ENCODE measurements at regions of chr11 and their contacts with region 1.

Region 1: DNA sequence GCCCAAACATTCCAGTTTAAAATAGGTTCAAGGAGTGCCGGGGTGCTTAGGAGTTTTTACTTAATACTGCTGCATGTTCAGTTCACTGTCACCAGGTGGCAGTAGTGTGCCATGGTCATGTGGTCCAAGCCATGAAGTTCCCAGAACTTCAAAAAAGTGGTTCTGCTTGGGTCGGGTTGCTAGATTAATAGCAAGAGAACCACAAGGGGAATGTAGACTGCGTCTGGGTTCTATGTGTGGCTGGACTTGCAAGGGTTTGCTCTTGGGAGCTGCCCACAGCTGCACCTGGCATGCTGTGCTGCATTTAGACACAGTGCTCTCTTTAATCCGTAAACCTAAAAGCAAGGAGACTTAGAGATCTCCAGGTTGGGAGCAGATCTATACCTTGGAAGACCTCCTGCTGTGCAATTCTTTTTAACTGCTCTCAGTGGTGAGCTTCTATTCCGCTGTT is 6.5 kb upstream of the SPON1 start:
- DNase-seq: peak; percentile 80
- H3K4me3 ChIP-seq: no peak overlapping the region
- H3K27ac ChIP-seq: no peak overlapping the region
- H3K4me1 ChIP-seq: peaks cover 20% of the 10 kb centered on the region
- CTCF ChIP-seq: peak; percentile 98

Region 2: DNA sequence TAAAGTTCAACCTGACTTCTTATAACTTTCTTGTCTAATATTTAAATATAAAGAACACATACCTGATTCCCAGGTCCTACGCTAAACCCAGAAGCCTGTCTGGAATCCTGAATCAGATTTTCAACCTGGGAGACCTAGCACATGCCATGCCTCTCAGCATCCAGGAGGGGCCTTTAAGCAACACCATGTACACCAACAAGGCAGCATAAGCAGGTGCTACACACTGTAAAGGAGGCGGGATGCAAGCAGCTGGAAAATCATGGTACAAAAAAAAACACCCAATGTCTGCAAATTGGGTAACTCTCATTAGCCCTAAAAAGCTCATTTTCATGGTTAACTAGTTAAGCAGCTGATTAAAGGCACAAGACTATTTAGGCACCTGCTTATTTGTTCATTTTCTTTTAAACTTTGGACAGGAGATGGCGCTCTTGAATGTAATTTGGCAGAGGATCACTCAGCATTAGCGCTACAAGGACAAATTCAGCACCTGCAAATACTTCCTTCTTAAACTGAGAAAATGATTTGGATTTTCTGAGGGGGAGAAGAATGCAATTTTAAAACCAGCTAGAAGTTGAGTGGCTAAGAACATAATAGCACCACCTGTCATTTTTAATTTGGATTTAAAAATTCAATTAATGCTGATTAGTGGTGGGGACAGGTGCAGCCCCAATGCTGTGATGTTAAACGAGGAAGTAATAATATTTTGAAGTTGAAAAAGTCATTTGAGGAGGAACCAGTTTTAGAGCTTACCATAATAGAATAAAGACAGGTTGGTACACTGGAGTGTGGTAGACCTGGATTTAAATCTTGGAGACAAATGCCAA is 183.6 kb before region 1 on chr11:
- CTCF ChIA-PET with region 1: no interaction called
- POLR2A ChIA-PET with region 1: interaction called, 5 read pairs
- intact Hi-C with region 1: loop called (anchors 2 kb)
- DNase-seq: peak; percentile 90
- H3K4me3 ChIP-seq: no peak overlapping the region
- H3K27ac ChIP-seq: peak overlapping the region; percentile 21
- H3K4me1 ChIP-seq: peaks cover 25% of the 10 kb centered on the region
- CTCF ChIP-seq: peak; percentile 98

Region 3: DNA sequence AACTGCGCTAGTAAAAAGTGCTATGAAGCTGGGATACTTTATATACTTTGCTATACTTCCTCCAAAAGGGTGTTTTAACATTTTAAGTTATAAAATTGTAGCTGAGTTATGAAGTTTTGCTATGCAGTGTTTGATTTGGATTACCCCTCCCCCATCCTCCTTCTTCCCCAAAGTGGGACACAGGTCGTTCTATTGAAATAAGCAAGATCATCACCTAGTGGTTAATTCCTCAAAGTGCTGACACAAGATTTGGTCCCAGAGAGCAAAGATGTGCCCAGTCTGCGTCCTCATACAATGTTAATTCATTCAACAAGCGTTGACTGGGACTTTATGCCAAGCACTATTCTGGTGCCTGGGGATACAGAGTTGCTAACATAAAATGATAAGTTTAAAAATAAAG is 85.0 kb after region 1 on chr11:
- CTCF ChIA-PET with region 1: no interaction called
- POLR2A ChIA-PET with region 1: interaction called, 7 read pairs
- intact Hi-C with region 1: loop called (anchors 5 kb)
- DNase-seq: peak; percentile 41
- H3K4me3 ChIP-seq: no peak overlapping the region
- H3K27ac ChIP-seq: no peak overlapping the region
- H3K4me1 ChIP-seq: no peaks in the 10 kb centered on the region
- CTCF ChIP-seq: peak; percentile 77

Region 4: DNA sequence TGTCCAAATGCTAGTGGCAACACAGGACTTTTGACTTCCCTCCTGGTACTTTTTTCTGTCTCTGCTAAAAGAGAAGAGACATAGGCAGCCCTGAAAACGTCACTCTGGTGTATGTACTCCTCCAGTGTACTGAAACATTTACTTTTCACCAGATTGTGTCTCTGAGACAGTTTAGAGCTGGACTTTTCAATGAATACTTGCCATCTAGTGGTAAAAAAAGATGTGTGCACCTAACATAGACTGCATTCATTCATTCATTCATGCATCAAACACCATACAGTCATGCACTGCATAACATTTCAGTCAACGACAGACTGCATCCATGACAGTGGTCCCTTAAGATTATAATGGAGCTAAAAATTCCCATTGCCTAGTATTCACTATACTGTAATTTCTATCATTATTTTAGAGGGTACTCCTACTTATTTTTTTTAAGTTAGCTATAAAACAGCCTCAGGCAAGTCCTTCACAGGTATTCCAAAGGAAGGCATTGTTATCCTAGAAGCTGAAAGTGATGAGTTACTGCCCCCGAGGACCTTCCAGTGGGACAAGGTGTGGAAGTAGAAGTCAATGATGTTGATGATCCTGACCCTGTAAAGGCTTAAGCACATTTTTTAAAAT is 192.8 kb after region 1 on chr11:
- CTCF ChIA-PET with region 1: interaction called, 3 read pairs
- POLR2A ChIA-PET with region 1: no interaction called
- intact Hi-C with region 1: loop called (anchors 1 kb)
- DNase-seq: peak; percentile 76
- H3K4me3 ChIP-seq: no peak overlapping the region
- H3K27ac ChIP-seq: no peak overlapping the region
- H3K4me1 ChIP-seq: peaks cover 3% of the 10 kb centered on the region
- CTCF ChIP-seq: peak; percentile 87

Measured in OCI-LY7 (cell line).